Astrocyte of the cerebellum (primary cell): ENCODE measurements at regions of chr20 and their contacts with region 1.

Region 1: DNA sequence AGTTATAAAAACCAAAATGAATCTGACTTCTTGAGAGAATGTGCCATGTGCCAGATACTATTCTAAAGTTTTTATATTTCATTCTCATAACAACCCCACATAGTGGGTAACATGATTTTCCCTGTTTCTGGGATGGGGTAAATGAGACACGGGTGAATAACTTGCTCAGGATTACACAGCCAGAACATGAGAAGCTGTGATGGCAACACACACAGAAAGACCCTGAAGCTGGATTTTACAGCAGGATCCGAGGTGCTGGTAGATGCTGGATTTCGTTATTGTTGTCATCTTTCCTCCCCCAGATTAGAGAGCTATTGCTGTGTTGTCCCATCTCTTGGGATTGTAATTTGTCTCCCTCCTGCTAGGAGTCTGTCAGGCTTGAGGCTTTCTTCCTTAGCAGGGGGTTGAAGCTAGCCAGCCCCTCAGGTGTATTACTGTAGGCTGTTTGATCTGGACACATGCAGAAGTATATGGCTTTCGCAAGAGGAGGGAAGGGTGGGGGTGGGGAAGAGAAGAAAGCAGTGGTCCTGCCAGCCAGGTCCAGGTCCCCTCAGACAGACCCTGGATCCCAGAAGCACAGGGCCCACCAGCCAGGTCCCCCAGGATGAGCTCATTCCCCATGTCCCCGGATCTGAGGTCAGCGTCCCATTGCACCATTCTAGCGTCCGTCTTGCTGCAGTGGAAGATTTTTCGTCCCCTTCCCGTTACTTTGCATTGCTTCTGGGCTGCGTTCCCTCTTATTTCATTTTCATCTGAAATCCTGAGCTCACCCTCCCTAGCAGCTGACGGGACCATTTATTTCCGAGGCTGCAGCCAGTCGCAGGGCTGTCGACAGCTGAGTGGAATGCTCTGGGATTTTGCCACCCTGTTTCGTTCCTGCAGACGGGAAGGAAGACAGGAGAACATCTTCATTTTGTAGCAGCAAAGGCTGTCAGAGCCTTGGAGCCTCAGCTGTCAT is 7.3 kb upstream of the KCNG1 start:
- DNase-seq: no peak
- H3K4me3 ChIP-seq: no peak overlapping the region
- CTCF ChIP-seq: no peak

Region 2: DNA sequence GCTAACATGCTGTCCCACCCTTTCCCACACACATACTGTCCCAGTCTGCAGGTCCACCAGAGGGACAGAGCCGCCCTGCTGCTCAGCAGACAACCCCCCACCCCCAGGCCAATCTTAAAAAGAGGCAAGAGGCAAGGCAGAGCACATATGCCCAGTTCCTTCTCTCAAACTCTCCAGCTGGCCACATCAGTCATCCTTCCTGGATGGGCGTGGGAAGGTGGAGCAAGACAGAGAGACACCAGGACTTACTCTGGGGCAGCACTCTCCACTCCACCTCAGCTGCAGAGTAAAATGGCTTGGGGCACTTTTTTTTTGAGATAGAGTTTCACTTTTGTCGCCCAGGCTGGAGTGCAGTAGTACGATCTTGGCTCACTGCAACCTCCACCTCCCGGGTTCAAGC is 60.8 kb before region 1 on chr20:
- in situ Hi-C with region 1: no loop called
- DNase-seq: no peak
- H3K4me3 ChIP-seq: no peak overlapping the region
- CTCF ChIP-seq: no peak

Region 3: DNA sequence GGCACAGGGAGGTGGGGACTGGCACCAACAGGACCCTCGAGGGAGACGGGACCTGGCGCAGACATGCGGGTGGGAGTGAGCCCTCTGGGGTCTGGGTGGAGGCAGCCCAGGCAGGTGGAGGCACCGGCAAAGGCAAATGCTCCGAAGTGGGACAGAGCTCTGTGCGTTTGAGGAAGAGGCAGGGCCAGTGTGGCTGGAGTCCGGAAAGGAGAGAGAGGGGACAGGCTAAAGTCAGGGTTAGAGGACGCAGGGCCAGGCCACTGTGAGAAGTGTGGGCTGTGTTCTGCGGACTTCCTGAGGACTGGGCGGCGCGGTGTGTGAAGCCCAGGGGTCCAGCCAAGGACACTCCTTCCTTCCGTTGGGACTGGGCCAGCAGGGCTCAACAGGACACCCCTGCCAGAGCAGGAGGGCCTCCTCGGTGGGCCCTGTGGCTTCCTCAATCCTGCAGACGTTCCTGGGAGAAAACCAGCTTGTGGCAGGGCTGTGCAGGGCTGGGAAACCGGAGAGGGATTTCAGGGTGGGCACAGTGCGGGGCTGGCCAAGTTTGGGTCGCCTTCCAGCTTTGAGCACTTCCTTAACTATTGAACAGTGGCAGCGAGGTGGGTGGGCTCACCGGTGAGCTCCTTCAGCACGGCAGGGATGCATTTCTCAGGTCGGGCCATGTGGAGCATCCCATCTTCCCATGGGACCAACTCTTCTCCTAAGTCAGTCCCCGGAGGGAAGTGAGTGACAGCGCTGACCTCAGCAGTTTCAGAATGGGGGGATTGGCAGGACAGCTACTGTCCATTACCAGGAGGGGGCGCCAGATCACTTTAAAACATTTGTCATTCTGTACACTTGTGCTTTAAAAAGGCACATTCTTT is 49.2 kb before region 1 on chr20:
- in situ Hi-C with region 1: no loop called
- DNase-seq: peak; percentile 38
- H3K4me3 ChIP-seq: no peak overlapping the region
- CTCF ChIP-seq: peak; percentile 78

Region 4: DNA sequence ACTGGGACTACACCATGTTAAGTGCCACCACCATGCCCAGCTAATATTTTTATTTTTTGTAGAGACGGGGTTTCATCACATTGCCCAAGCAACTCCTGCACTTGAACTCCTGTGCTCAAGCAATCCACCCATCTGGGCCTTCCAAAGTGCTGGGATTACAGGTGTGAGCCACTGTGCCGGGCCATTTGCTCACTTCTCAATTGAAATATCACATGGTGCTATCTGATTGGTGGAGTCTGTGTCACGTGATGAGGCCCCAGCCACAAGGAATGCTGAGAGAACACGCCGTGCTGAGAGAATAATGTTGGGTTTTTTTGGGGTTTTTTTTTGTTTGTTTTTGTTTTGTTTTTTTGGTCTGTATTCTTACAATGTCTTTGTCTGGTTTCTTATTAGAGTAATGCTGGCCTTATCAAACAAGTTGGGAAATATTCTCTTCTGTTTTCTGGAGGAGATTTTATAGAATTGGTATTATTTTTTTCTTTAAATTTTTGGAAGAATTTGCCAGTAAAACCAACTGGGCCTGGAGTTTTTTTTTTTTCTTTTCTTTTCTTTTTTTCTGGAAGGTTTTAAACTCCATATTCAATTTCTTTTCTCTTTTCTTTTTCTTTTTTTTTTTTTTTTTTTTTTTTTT is 175.9 kb after region 1 on chr20:
- in situ Hi-C with region 1: loop called (anchors 5 kb)
- DNase-seq: no peak
- H3K4me3 ChIP-seq: no peak overlapping the region
- CTCF ChIP-seq: no peak

Region 5: DNA sequence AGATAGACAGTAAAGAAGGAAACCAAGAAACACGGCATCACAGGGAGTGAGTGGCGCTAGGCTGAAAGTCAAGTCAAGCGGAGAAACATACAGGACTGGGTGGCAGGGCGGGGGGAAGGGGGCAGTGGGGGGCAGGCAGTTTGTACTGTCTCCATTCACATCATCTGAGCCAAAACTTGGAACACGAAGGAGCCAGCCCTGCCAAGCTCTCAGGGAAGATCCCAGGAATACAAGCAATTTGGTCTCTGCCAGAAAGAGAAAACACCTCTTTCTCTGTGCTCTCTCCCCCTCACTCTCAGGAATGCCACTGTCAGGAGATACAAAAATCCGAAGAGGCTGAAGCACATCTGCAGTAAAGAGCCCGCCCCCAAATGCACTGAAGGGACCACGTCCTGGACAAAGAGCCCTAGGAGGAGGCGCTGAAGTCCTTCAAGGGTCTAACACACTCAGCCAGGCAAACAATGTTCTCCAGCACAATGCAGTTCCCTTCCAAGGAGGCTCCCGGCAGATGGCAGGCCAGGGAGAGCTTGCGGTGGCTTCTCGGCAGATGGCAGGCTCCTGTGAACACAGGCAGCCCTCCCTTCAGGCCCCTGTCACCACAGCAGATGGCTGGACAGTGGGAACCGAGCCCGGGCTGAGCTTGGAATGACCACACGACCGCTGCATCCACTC is 647.9 kb after region 1 on chr20:
- in situ Hi-C with region 1: no loop called
- DNase-seq: no peak
- H3K4me3 ChIP-seq: no peak overlapping the region
- CTCF ChIP-seq: peak; percentile 47